ENCODE measurements at regions of chr7 and their contacts with region 1.

Region 1: DNA sequence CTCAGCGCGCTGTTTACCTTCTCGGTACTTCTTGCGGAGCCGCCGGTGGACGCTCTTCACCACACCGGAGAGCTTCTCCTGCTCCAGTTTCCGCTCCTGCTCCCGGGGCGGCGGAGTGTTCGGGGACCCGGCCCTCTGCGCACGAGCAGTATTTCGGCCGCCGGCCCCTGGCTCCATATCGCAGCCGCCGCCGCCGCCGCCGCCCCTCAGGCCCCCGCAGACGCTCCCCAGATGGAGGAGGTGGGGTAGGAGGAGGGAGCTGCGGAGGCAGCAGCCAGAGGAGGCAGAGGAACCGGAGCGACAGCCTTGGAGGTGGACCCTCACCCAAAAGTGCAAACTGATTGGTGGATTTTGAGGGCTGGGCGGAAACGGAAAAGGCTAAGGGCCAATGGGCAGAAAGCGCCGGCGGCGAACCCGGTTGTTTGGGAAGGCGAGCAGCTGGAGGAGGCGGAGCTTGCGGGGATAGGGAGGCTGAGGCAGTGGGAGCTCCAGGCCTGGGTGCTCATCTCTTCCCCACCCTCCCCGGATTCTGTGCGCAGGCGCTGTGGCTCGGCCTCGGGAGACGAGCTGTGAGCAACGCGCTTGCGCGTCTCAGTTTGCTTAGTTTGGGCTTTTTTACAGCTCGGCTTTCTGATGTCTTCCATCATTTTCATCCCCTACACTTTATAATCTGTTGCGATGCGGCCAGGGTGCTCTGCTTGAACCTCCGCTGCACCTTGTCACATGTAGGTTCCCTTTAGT is 146.9 kb downstream of the GPR85 start:
- DNase-seq: peak; percentile 99 to 100
- ATAC-seq: peak; percentile 99 to 100 (median 100)
- H3K4me3 ChIP-seq: peak overlapping the region; percentile 70
- H3K27ac ChIP-seq: peak overlapping the region; percentile 85
- H3K4me1 ChIP-seq: peaks cover 17% of the 10 kb centered on the region
- H3K27me3 ChIP-seq: no peaks in the 10 kb centered on the region
- CTCF ChIP-seq: no peak

Region 2: GRCh38 chr7:111198255-111198654 is 1741.5 kb before region 1 on chr7:
- intact Hi-C with region 1: loop called in 1 of 2 experiments (anchors 10 kb)
- DNase-seq: no peak
- ATAC-seq: peak; percentile 85 to 99 (median 96)
- H3K4me3 ChIP-seq: no peak overlapping the region
- H3K27ac ChIP-seq: no peak overlapping the region
- H3K4me1 ChIP-seq: no peaks in the 10 kb centered on the region
- H3K27me3 ChIP-seq: no peaks in the 10 kb centered on the region
- CTCF ChIP-seq: no peak

Region 3: DNA sequence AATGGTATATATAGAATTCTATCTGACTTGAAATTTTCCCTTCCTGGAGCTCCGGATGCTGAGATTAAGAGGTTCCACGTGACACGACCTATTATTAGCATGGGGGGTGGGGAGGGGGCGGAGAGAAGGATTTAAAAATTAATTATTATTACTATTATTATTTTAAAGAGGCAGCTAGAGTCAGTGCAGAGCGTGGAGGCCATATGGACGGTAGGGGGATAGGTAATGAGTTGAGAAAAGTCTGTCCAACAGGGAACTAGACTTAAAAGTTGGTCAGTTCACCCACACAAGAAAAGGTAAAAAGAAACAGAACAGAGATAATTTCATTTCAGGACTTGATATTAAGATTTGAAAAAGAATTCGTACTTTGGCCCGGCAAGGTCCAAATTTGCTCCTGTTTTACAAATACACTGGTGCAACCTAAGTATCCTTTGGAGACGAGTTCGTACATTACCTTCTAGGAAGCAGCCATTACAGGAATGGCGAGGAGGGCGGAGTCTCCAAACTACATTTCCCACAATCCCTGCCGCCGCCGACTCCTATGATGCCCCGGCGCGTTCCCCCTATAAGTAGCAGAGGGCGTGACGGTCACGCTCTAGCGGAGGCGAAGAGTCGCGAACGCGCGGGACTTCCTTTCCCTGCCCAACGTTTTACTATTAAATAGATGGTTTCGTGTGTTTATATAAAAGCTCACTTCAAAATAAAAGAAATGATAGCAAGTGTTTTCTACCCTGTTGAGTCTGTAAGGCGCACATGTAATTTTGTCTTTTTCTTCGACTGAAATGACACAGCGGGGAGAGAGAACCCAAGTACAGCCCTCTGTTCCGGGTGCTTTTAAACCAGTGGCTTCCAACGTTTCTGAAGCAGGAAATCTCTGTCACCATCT is 178.6 kb after region 1 on chr7 and contains the start of gene SMIM30:
- intact Hi-C with region 1: loop called in 1 of 2 experiments (anchors 5 kb)
- DNase-seq: peak; percentile 92 to 94
- ATAC-seq: peak; percentile 99 to 100 (median 100)
- H3K4me3 ChIP-seq: peak within 1 kb of the TSS; percentile 84
- H3K27ac ChIP-seq: peak within 1 kb of the TSS; percentile 92
- H3K4me1 ChIP-seq: peaks cover 15% of the 10 kb centered on the region
- H3K27me3 ChIP-seq: no peaks in the 10 kb centered on the region
- CTCF ChIP-seq: no peak
- total RNA-seq, gene SMIM30: 60.9 to 72.1 (median 65.6) TPM

Measured in psoas muscle (tissue), 8 donors.